HepG2 (cell line): ENCODE measurements at regions of chr1 and their contacts with region 1.

Region 1: GRCh38 chr1:156860113-156860627 is 495 bp upstream of the NTRK1 start:
- DNase-seq: no peak
- ATAC-seq: peak; percentile 74
- H3K4me3 ChIP-seq: peak overlapping the region in 1 of 3 experiments; percentile 55; a peak in 1 of 6 replicates
- H3K27ac ChIP-seq: no peak overlapping the region
- H3K4me1 ChIP-seq: peaks cover 24% of the 10 kb centered on the region
- H3K27me3 ChIP-seq: peaks cover 25 to 87% of the 10 kb centered on the region in 2 experiments
- CTCF ChIP-seq: peak; percentile 84
- EP300 ChIP-seq: no peak
- POLR2A ChIP-seq: no peak
- RAD21 ChIP-seq: peak; percentile 83

Region 2: DNA sequence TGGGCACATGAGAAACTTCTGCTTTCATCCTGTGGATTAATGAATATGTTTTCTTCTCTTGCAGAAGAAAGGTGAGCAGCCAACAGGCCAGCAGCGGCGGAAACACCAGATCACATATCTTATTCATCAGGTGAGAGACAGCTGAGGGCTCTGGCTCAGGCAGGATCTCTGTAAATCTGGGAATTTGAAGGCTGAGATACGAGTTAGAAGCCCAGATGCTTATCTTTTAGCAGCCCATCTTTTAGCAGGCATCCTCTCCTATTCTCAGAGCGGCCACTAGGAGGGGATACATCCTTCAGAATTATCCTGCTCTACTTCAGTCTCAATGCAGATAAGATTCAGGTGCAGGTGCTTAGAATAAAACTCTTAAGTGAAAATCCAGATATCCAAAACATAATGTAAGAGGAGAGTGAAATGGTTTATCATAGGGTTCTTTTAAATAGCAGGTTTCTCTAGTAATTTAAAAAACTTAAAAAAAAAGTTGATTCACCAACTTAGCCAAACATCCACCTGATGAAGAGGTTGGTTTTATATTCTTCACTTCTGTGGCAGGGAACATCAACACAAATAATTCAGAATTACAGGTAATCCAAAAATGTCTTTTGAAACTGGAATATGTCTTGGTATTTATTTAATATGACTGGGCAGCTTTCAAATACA is 62.8 kb before region 1 on chr1:
- CTCF ChIA-PET with region 1: interaction called, 8 read pairs
- POLR2A ChIA-PET with region 1: no interaction called
- in situ Hi-C with region 1: loop called (anchors 5 kb)
- intact Hi-C with region 1: loop called (anchors 10 kb)
- DNase-seq: peak; percentile 55
- ATAC-seq: peak; percentile 53; the same call in 2 of the 3 replicates
- H3K4me3 ChIP-seq: no peak overlapping the region
- H3K27ac ChIP-seq: no peak overlapping the region
- H3K4me1 ChIP-seq: peaks cover 39% of the 10 kb centered on the region
- H3K27me3 ChIP-seq: no peaks in the 10 kb centered on the region
- CTCF ChIP-seq: peak; percentile 68
- EP300 ChIP-seq: no peak
- POLR2A ChIP-seq: no peak
- RAD21 ChIP-seq: 0 out of 2 replicates have a peak, but pooled peaks have one; percentile 25

Region 3: DNA sequence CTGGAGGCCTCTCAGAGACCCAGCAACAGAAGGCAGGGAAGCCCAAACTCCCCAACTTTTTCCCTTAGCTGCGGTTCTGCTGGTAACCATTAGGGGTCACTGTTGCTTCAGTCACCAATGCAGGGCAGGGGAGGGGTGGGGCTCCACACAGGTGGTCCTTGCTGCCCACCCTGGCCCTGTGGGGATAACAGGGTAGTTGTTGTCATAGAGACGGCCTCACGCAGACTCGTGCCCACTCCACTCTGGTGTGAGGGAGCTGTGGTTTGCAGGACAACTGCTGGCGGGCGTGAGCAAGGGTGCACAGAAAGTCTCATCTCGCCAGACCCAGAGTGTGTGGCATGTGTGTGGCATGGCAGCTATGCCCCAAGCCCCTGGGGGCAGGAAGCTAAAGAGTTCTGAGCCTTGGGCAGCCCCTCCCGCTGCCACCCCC is 21.2 kb before region 1 on chr1:
- CTCF ChIA-PET with region 1: interaction called, 21 read pairs
- POLR2A ChIA-PET with region 1: no interaction called
- in situ Hi-C with region 1: no loop called
- intact Hi-C with region 1: loop called (anchors 1 kb)
- DNase-seq: no peak
- ATAC-seq: peak; percentile 69
- H3K4me3 ChIP-seq: no peak overlapping the region
- H3K27ac ChIP-seq: no peak overlapping the region
- H3K4me1 ChIP-seq: no peaks in the 10 kb centered on the region
- H3K27me3 ChIP-seq: peaks cover 1 to 58% of the 10 kb centered on the region in 2 experiments; a peak in 2 of 5 replicates
- CTCF ChIP-seq: peak; percentile 90
- EP300 ChIP-seq: no peak
- POLR2A ChIP-seq: no peak
- RAD21 ChIP-seq: peak; percentile 71